ENCODE measurements at regions of chr3 and their contacts with region 1.

Region 1: DNA sequence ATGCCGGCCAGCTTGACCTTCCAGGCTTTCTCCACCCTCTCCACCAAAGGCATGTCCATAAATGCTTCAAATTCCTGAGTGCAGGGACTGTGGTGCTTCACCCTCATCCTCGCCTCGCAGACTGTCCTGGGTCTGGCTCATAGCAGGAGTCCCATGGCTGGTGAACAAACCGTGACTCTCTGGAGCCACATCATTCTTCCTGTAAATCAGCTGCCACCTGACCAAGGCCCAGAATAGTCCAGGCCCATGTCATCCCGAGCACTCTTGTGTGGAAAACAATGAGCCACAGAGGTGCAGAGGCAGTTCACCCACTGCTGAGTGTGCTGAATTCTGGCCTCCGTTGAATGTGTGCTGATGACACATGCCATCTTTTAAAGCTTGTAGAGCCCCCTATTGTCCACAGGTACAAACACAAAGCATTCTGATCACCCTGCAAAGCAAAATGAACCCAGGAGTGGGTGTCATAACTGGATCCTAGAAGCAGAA is 68.6 kb downstream of the ABHD5 start:
- DNase-seq: no peak
- H3K4me3 ChIP-seq: no peak overlapping the region
- H3K27ac ChIP-seq: peak overlapping the region; percentile 68
- H3K27me3 ChIP-seq: no peaks in the 10 kb centered on the region
- CTCF ChIP-seq: peak; percentile 39

Region 2: GRCh38 chr3:43638594-43639447 is 120.5 kb before region 1 on chr3:
- CTCF ChIA-PET with region 1: no interaction called
- POLR2A ChIA-PET with region 1: no interaction called
- DNase-seq: no peak
- H3K4me3 ChIP-seq: no peak overlapping the region
- H3K27ac ChIP-seq: no peak overlapping the region
- H3K27me3 ChIP-seq: no peaks in the 10 kb centered on the region
- CTCF ChIP-seq: 0 out of 2 replicates have a peak, but pooled peaks have one; percentile 3

Region 3: DNA sequence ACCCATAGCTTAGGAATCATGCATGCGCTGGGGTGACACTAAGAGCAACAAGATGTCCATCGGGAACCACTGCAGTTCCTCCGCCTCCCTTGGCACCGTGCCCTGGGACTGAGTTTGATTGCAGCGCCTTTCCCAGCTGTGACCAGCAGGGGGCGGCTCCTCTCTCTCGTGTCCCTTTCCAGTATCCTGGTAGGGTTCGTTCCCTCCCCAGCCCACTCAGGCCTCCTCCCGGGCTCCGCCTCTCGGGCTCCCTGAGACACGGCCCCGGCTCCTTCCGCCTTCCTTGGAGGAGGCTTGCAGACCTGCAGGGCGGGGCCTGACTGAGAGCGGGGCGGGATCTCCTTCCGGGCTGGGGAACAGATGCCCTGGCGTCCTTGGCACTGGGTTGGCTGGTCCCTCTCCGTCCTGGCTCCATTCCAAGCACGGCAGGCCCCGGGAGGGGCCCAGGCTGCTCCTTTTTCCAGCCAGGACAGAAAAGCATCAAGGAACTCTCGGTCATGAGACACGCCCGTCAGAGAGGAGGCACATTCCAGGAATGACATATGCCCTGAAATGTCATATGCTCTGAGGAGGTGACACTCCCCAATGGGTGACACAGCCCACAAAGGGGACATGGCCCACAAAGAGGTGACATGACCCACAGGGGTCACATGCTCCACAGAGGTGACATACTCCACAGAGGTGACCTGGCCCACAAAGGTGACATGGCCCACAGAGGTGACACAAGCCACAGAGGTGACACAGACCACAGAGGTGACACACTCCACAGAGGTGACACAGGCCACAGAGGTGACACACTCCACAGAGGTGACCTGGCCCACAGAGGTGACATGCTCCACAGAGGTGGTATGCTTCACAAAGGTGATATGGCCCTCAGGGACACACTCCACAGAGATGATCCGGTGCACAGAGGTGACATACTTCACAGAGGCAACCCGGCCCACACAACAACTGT is 10.4 kb after region 1 on chr3:
- CTCF ChIA-PET with region 1: interaction called, 19 read pairs
- POLR2A ChIA-PET with region 1: no interaction called
- DNase-seq: peak; percentile 88
- H3K4me3 ChIP-seq: peak overlapping the region; percentile 53
- H3K27ac ChIP-seq: no peak overlapping the region
- H3K27me3 ChIP-seq: no peaks in the 10 kb centered on the region
- CTCF ChIP-seq: peak; percentile 91

Region 4: DNA sequence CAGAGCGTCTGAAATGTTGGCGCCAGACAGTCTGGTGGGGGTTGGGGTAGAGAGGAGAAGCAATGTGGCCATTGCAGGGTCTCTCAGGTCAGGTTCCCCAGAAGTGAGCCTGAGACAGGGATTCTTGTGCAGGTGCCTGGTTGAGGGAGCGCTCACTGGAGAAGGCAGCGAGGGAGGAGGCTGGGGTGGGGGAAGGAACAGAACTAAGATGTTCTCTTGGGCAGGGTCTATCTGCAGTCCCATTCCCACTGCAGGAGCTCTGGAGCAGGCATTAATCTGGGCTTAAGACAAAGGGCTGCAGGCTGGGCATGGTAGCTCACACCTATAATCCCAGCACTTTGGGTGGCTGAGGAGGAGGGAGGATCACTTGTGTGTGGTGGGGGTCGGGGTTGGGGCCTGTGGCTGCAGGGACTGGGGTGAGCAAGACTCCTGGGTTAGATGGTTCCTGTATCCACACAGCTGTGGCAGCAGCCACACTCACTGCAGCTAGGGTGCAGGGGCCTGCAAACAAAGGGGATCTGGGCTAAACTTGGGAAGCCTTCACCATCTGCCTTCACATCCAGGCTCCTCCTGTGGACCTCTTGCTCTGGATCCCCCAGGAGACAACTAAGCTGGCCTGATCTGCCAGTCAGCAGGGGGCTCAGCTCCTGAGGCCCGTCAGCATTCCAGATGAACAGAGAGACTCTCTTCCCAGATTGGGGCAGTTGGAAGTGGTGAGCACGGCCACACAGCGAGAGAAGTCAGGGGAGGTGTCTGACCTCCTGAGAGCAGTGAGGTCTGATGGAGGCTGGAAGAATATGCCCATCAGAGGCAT is 103.9 kb after region 1 on chr3:
- CTCF ChIA-PET with region 1: no interaction called
- POLR2A ChIA-PET with region 1: no interaction called
- DNase-seq: no peak
- H3K4me3 ChIP-seq: no peak overlapping the region
- H3K27ac ChIP-seq: no peak overlapping the region
- H3K27me3 ChIP-seq: no peaks in the 10 kb centered on the region
- CTCF ChIP-seq: no peak